Aorta (tissue), 5 donors: ENCODE measurements at regions of chr6 and their contacts with region 1.

Region 1: DNA sequence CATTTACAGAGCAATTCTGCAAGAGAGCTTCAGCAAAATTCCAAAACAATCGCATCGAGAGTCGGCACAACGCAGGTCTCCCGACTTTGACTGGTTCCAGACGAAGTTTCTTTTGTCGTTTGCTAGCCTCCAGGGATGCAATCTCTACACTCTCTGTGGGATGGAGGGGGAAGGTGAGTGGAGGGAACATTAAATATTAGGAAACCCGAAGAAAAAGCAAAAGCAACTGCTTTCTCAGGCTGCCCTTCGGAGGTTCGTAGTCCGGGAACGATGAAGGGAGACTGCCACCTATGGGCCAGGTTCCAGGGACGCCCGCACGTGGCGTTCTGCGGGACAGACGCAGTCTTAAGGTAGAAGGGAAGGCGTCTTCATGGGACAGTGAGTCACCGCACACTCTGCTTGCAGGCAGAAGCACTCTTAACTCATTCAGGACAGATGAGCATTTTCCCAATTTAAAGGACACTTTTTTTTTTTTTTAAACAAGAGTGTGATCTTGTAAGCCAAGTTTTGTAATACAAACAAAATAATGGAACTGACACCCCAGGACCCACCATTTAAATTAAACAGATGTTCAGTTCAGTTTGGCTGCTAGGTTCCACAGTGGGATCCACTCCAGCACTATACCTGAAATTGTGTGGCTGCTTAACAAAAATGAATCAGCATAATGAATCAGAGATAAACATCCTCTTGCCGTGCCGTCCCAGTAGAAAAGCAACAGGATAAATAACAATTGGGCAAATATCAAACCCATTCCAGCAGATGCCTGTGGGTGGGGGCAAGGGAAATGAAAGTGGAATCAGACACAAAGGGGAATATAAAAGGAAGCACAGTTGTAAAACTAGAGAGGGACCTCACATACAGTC is 65.8 kb upstream of the ARMC2 start:
- DNase-seq: peak; percentile 88 to 93
- ATAC-seq: peak; percentile 91
- H3K4me3 ChIP-seq: no peak overlapping the region
- H3K27ac ChIP-seq: no peak overlapping the region
- H3K4me1 ChIP-seq: no peaks in the 10 kb centered on the region
- H3K27me3 ChIP-seq: no peaks in the 10 kb centered on the region

Region 2: GRCh38 chr6:108541838-108542759 is 240.3 kb before region 1 on chr6:
- intact Hi-C with region 1: loop called (anchors 5 kb)
- DNase-seq: peak in 1 of 2 donors; percentile 80
- ATAC-seq: peak; percentile 82
- H3K4me3 ChIP-seq: no peak overlapping the region
- H3K27ac ChIP-seq: no peak overlapping the region
- H3K4me1 ChIP-seq: no peaks in the 10 kb centered on the region
- H3K27me3 ChIP-seq: no peaks in the 10 kb centered on the region

Region 3: DNA sequence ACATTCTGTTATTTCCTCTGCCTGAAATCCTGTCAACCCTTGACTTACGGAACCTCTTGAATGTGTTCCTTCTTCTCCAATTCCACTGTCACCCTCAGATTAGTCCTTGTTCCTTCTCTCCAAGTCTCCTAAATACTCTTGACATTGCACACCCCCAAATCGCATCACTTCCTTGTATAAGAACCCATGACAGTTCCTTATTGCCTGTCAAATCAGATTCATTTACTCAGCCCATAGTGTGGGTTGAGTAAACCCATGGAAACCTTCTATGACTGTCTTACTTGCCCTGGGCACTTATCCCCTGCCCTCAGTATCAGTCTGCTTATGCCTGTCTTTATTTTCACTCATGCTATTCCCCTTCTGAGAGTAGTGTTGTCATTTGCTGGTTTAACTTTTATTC is 106.3 kb after region 1 on chr6:
- intact Hi-C with region 1: loop called (anchors 5 to 10 kb)
- DNase-seq: no peak
- ATAC-seq: no peak
- H3K4me3 ChIP-seq: no peak overlapping the region
- H3K27ac ChIP-seq: no peak overlapping the region
- H3K4me1 ChIP-seq: no peaks in the 10 kb centered on the region
- H3K27me3 ChIP-seq: no peaks in the 10 kb centered on the region

Region 4: DNA sequence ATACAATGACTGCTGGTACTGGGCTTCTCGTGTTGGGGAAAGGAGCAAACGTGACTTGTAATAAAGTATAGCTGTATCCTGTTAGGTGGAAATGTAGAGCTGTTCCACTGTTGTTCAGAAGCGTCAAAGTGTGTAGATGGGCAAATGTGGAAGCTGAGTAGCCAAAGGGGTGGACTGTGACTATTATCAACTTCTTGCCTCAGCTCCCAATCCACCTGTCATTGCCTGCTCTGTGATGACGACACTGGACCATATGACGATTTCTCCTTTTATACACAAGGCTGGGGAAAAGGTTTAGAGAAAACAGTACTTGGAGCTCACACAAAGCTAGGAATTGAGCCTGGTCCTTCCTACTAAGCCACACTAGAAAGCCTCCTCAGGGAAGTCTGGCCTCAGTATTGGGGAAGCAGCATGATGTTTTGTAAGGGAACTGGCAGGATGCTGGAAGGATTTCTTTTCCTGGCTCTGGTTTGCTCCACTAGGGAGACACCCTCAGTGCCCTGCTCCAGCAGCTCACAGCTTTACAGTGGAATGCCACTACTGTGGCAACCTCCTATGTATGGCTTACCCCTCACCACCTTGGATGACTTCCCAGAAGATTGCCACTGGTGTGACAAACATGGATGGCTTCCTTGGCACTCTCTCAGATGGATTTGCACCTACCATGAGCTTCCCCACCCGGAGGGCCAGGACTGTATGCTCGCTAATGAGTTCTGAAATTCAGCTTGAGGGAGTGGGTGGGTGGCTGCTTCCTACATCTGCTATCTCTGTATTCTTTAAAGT is 579.9 kb after region 1 on chr6:
- intact Hi-C with region 1: no loop called
- DNase-seq: no peak
- ATAC-seq: no peak
- H3K4me3 ChIP-seq: no peak overlapping the region
- H3K27ac ChIP-seq: no peak overlapping the region
- H3K4me1 ChIP-seq: no peaks in the 10 kb centered on the region
- H3K27me3 ChIP-seq: no peaks in the 10 kb centered on the region